ENCODE measurements at regions of chr16 and their contacts with region 1.

Region 1: DNA sequence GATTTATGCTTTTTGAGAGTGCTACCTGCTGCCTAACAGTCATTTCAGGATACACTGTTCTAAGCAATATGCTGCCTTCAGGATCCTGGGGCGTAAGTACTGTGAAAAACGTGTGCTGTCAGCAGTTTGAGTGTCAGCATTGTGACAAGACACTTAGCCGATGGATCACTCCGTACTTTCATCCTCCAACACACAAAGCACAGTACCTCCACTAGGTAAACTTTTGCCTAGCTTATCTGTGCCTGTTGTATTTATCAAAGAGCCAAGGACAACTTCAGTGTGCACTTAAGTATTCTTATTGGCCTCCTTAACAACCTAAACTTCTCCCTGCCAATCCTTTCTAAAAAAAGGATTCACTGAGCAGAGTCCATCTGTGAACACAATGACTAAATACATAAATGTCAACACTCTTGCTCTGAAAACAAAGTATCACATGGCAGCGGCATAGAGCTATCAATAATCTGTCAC is 33.8 kb upstream of the PHLPP2 start:
- DNase-seq: no peak

Region 2: GRCh38 chr16:71484006-71484893 is 274.1 kb before region 1 on chr16:
- intact Hi-C with region 1: no loop called
- DNase-seq: peak; percentile 93

Region 3: GRCh38 chr16:71693164-71693563 is 65.2 kb before region 1 on chr16:
- intact Hi-C with region 1: no loop called
- DNase-seq: no peak

Region 4: GRCh38 chr16:71961066-71962039 is 203.0 kb after region 1 on chr16:
- intact Hi-C with region 1: loop called (anchors 10 kb)
- DNase-seq: peak; percentile 91